Activated CD4-positive, alpha-beta T cell treated with anti-CD3 and anti-CD28 coated beads for 36 hours (primary cell): ENCODE measurements at regions of chr3 and their contacts with region 1.

Region 1: GRCh38 chr3:160163229-160163878 is 61.9 kb upstream of the C3orf80 start:
- DNase-seq: no peak
- ATAC-seq: no peak
- H3K4me3 Mint-ChIP-seq: no peak overlapping the region
- H3K27ac Mint-ChIP-seq: no peak overlapping the region
- H3K4me1 Mint-ChIP-seq: no peaks in the 10 kb centered on the region
- H3K27me3 Mint-ChIP-seq: no peaks in the 10 kb centered on the region

Region 2: DNA sequence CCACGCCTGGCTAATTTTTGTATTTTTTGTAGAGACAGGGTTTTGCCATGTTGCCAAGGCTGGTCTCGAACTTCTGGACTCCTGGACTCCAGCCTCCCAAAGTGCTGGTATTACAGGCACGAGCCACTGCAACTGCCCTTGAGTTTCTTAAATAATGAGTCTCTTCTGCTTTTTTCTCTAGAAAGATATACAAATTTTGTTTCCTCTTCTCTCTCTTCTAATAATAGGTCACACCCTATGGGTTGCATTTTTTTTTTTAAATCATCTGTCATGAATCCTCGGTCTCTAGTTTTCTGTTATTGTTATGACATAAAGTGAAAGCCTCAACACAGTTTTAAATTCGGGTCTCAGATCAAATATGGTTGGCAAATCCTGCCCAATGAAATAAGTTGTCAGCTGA is 63.5 kb before region 1 on chr3:
- CTCF ChIA-PET with region 1: no interaction called
- POLR2A ChIA-PET with region 1: no interaction called
- intact Hi-C with region 1: no loop called
- DNase-seq: no peak
- ATAC-seq: no peak
- H3K4me3 Mint-ChIP-seq: no peak overlapping the region
- H3K27ac Mint-ChIP-seq: no peak overlapping the region
- H3K4me1 Mint-ChIP-seq: no peaks in the 10 kb centered on the region
- H3K27me3 Mint-ChIP-seq: peaks cover 3% of the 10 kb centered on the region

Region 3: GRCh38 chr3:160343132-160343531 is 179.8 kb after region 1 on chr3:
- CTCF ChIA-PET with region 1: no interaction called
- POLR2A ChIA-PET with region 1: no interaction called
- intact Hi-C with region 1: loop called in 1 of 2 experiments (anchors 5 kb)
- DNase-seq: no peak
- ATAC-seq: no peak
- H3K4me3 Mint-ChIP-seq: no peak overlapping the region
- H3K27ac Mint-ChIP-seq: no peak overlapping the region
- H3K4me1 Mint-ChIP-seq: no peaks in the 10 kb centered on the region
- H3K27me3 Mint-ChIP-seq: no peaks in the 10 kb centered on the region